ENCODE measurements at regions of chr4 and their contacts with region 1.

Region 1: GRCh38 chr4:174365018-174365587 is 81.4 kb downstream of the CEP44 start:
- DNase-seq: no peak
- H3K4me3 ChIP-seq: no peak overlapping the region
- H3K27ac ChIP-seq: no peak overlapping the region
- H3K4me1 ChIP-seq: no peaks in the 10 kb centered on the region
- H3K27me3 ChIP-seq: no peaks in the 10 kb centered on the region
- CTCF ChIP-seq: peak in 2 of 3 experiments; percentile 32 to 52

Region 2: GRCh38 chr4:174631901-174632758 is 267.0 kb after region 1 on chr4:
- intact Hi-C with region 1: loop called (anchors 1 kb)
- DNase-seq: no peak
- H3K4me3 ChIP-seq: no peak overlapping the region
- H3K27ac ChIP-seq: no peak overlapping the region
- H3K4me1 ChIP-seq: no peaks in the 10 kb centered on the region
- H3K27me3 ChIP-seq: no peaks in the 10 kb centered on the region
- CTCF ChIP-seq: peak; percentile 27 to 70 (median 48)